Heart right ventricle (tissue), 16 donors: ENCODE measurements at regions of chr3 and their contacts with region 1.

Region 1: DNA sequence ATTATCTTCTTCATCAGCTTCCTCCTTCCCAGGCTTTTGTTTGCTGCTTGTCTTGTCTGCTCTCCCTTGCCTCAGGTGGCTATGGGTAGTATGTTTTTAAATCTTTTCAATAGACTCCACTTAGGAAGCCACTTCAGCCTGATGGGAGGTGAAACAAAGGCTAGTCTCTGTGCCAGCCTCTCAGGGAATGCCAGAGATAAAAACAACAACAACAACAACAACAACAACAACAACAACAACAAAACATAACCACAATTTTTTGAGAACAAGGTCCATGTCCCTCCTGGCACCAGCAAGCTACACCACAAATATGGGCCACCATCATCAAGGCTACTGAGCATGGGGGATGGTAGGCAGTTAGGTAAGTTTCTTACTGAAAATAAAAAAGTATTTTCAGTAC is 64.8 kb upstream of the UBP1 start:
- DNase-seq: no peak
- ATAC-seq: no peak
- H3K4me3 ChIP-seq: no peak overlapping the region
- H3K27ac ChIP-seq: no peak overlapping the region
- H3K4me1 ChIP-seq: no peaks in the 10 kb centered on the region
- H3K27me3 ChIP-seq: no peaks in the 10 kb centered on the region
- CTCF ChIP-seq: no peak

Region 2: GRCh38 chr3:33385423-33385822 is 119.6 kb before region 1 on chr3:
- intact Hi-C with region 1: loop called in 1 of 10 experiments (anchors 5 kb)
- DNase-seq: no peak
- ATAC-seq: no peak
- H3K4me3 ChIP-seq: no peak overlapping the region
- H3K27ac ChIP-seq: no peak overlapping the region
- H3K4me1 ChIP-seq: peaks cover 0 to 7% (median 0%) of the 10 kb centered on the region in 9 donors
- H3K27me3 ChIP-seq: no peaks in the 10 kb centered on the region
- CTCF ChIP-seq: no peak

Region 3: GRCh38 chr3:33544126-33544525 is 39.1 kb after region 1 on chr3:
- intact Hi-C with region 1: no loop called
- DNase-seq: no peak
- ATAC-seq: no peak
- H3K4me3 ChIP-seq: no peak overlapping the region
- H3K27ac ChIP-seq: no peak overlapping the region
- H3K4me1 ChIP-seq: peaks cover 0 to 3% (median 0%) of the 10 kb centered on the region in 9 donors
- H3K27me3 ChIP-seq: no peaks in the 10 kb centered on the region
- CTCF ChIP-seq: no peak